CD8-positive, alpha-beta memory T cell (primary cell): ENCODE measurements at regions of chr13 and their contacts with region 1.

Region 1: DNA sequence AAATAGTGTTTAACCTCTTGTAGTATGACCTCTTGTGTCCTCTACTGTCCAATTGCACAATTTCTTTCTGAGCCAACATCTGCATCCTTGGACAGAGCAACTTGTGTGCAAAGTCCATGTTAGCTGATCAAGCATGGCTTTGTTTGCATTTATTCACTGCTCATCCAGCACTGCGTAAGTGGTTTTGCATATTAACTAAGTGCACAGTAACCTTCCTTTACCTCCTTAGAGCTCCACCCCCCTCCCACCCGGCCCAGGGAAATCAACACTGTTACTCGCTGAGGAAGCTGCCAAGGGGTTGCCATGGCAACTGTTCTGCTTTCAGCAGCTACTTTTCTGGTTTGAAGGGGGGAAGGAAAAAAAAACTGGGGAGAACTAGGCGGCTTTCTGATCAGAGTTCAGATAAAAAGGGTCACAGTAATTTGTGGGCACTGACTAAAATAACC is 153.5 kb upstream of the KLF12 start:
- DNase-seq: peak; percentile 77 to 96 (median 90)
- H3K4me3 ChIP-seq: peak overlapping the region; percentile 36
- H3K4me3 Mint-ChIP-seq: peak overlapping the region; percentile 62 to 79 (median 74)
- H3K27ac ChIP-seq: peak overlapping the region; percentile 41
- H3K27ac Mint-ChIP-seq: peak overlapping the region; percentile 36 to 98 (median 90)
- H3K4me1 ChIP-seq: peaks cover 48% of the 10 kb centered on the region
- H3K4me1 Mint-ChIP-seq: peaks cover 40 to 77% (median 59%) of the 10 kb centered on the region in 3 donors
- H3K27me3 ChIP-seq: no peaks in the 10 kb centered on the region
- H3K27me3 Mint-ChIP-seq: peaks cover 0 to 2% of the 10 kb centered on the region in 2 donors

Region 2: DNA sequence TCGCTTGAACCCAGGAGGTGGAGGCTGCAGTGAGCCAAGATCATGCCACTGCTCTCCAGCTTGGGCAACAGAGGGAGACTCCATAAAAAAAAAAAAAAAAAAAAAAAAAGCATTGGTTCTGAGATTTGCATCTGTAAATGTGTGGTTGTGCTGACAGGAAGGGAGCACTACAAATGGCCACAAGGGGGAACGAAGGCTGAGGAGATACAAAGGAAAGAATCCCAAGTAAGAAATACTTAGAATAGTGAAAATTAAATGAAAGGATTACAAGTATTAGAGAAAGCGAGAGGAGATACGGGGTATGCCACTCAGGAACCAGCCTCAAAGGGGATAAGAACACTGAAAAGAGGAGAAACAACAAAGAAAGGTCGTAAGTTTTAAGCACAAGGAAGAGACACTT is 438.5 kb before region 1 on chr13:
- CTCF ChIA-PET with region 1: interaction called, 22 read pairs
- POLR2A ChIA-PET with region 1: interaction called, 6 read pairs
- DNase-seq: no peak
- H3K4me3 ChIP-seq: no peak overlapping the region
- H3K4me3 Mint-ChIP-seq: peak overlapping the region in 2 of 7 donors; percentile 6 to 17
- H3K27ac ChIP-seq: no peak overlapping the region
- H3K27ac Mint-ChIP-seq: peak overlapping the region in 4 of 8 donors; percentile 9 to 62 (median 38)
- H3K4me1 ChIP-seq: peaks cover 13% of the 10 kb centered on the region
- H3K4me1 Mint-ChIP-seq: peaks cover 52 to 78% (median 77%) of the 10 kb centered on the region in 3 donors
- H3K27me3 ChIP-seq: no peaks in the 10 kb centered on the region
- H3K27me3 Mint-ChIP-seq: no peaks in the 10 kb centered on the region

Region 3: DNA sequence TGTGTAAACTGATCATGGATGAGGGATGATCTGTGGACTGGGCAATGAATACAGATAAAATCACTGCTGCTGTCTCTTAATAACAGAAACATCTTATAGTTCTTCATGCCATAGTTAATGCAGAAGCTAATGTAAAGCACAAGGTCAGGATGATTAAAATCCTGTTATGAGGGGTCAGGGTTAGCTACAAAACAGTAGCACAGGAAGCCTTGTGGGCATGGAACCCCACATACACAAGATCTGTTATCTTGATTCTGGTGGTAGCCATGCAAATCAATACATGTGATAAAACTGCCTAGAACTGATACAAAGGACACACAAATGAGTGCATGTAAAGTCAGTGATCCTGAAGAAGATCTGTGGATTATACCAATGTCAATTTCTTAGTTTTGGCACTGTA is 250.0 kb before region 1 on chr13:
- CTCF ChIA-PET with region 1: interaction called, 10 read pairs
- POLR2A ChIA-PET with region 1: no interaction called
- DNase-seq: peak in 1 of 5 donors; percentile 4
- H3K4me3 ChIP-seq: peak overlapping the region; percentile 3
- H3K4me3 Mint-ChIP-seq: peak overlapping the region in 6 of 7 donors; percentile 15 to 61 (median 35)
- H3K27ac ChIP-seq: no peak overlapping the region
- H3K27ac Mint-ChIP-seq: peak overlapping the region in 5 of 8 donors; percentile 0 to 48 (median 20)
- H3K4me1 ChIP-seq: peaks cover 51% of the 10 kb centered on the region
- H3K4me1 Mint-ChIP-seq: peaks cover 71 to 86% (median 83%) of the 10 kb centered on the region in 3 donors
- H3K27me3 ChIP-seq: no peaks in the 10 kb centered on the region
- H3K27me3 Mint-ChIP-seq: no peaks in the 10 kb centered on the region

Region 4: DNA sequence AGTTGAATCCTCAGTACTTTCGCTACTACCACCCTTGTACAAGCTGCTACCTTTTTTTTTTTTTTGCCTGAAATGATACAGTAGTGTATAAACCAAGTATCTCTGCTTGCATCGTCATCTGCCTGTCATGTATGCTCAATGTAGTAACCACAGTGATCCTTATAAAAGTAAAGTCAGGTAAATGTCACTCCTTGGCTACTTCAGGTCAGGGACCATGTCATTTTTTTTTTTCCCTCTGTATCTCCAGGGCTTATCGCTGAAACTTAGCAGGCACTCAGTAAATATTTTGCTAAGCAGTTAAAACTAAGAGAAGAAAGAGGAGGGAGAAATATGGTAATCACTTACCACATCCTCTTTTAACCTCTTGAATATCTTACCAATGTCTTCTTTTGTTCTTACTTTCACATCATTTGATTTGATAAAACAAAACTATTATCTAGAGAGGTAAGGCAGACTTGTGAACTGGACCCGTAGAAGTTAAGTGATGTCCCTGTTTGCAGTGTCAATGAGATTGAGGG is 56.7 kb before region 1 on chr13:
- CTCF ChIA-PET with region 1: interaction called, 23 read pairs
- POLR2A ChIA-PET with region 1: no interaction called
- DNase-seq: peak in 2 of 5 donors; percentile 45 to 63
- H3K4me3 ChIP-seq: peak overlapping the region; percentile 67
- H3K4me3 Mint-ChIP-seq: peak overlapping the region; percentile 84 to 91 (median 89)
- H3K27ac ChIP-seq: peak overlapping the region; percentile 45
- H3K27ac Mint-ChIP-seq: peak overlapping the region; percentile 30 to 97 (median 80)
- H3K4me1 ChIP-seq: peaks cover 36% of the 10 kb centered on the region
- H3K4me1 Mint-ChIP-seq: peaks cover 36 to 66% (median 51%) of the 10 kb centered on the region in 3 donors
- H3K27me3 ChIP-seq: no peaks in the 10 kb centered on the region
- H3K27me3 Mint-ChIP-seq: no peaks in the 10 kb centered on the region

Region 5: GRCh38 chr13:74253161-74253560 is 34.6 kb before region 1 on chr13:
- CTCF ChIA-PET with region 1: interaction called, 25 read pairs
- POLR2A ChIA-PET with region 1: interaction called, 8 read pairs
- DNase-seq: no peak
- H3K4me3 ChIP-seq: no peak overlapping the region
- H3K4me3 Mint-ChIP-seq: peak overlapping the region in 5 of 7 donors; percentile 19 to 77 (median 64)
- H3K27ac ChIP-seq: no peak overlapping the region
- H3K27ac Mint-ChIP-seq: peak overlapping the region in 5 of 8 donors; percentile 55 to 96 (median 90)
- H3K4me1 ChIP-seq: peaks cover 76% of the 10 kb centered on the region
- H3K4me1 Mint-ChIP-seq: peaks cover 88 to 99% (median 98%) of the 10 kb centered on the region in 3 donors
- H3K27me3 ChIP-seq: no peaks in the 10 kb centered on the region
- H3K27me3 Mint-ChIP-seq: no peaks in the 10 kb centered on the region